GM12878 (cell line): ENCODE measurements at regions of chr2 and their contacts with region 1.

Region 1: DNA sequence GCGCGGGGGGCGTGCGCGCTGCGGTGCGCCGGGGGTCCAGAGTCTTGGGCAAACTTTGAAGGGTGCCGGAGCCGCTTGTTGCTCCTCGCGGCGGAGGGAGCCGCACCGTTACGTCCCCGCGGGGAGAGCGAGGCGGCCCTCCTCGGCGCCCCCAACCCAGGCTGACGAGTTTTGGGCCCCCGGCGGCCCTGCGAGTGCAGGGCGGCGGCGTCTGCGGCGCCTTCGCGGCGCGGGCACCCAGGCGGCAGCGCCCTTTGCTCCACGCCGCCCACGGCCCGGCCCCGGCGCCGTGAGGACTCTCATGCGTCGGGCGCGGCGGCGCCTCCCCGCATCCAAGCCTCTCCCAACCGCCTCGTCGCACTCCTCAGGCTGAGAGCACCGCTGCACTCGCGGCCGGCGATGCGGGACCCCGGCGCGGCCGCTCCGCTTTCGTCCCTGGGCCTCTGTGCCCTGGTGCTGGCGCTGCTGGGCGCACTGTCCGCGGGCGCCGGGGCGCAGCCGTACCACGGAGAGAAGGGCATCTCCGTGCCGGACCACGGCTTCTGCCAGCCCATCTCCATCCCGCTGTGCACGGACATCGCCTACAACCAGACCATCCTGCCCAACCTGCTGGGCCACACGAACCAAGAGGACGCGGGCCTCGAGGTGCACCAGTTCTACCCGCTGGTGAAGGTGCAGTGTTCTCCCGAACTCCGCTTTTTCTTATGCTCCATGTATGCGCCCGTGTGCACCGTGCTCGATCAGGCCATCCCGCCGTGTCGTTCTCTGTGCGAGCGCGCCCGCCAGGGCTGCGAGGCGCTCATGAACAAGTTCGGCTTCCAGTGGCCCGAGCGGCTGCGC is 814 bp downstream of the FZD7 start:
- DNase-seq: no peak
- ATAC-seq: peak; percentile 5
- H3K4me3 ChIP-seq: peak overlapping the region; percentile 90
- H3K27ac ChIP-seq: no peak overlapping the region
- H3K4me1 ChIP-seq: no peaks in the 10 kb centered on the region; the same call in 1 of the 2 replicates
- H3K27me3 ChIP-seq: peaks cover 0 to 15% of the 10 kb centered on the region in 2 experiments; a peak in 2 of 4 replicates
- CTCF ChIP-seq: no peak
- EP300 ChIP-seq: no peak
- POLR2A ChIP-seq: no peak
- RAD21 ChIP-seq: no peak

Region 2: DNA sequence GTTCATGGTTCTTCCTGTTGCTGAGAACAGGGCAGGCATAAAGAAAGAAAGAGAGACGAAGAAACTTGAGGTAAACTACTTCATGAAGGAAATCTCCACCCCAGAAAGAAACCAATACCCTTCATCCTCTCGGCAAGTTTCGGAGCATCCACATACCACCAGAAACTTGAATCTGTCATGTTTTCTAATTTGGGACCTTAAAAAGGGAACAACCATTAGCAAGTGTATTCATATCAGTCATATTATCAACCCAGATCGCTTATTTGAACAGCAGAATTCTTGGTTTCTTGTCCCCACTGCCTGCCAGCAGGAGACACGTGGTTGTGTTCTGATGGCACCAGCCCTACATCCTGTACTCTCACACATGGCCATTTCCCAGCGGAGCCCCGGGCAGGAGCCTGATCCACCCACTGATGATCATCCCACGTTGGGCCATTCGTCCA is 54.1 kb before region 1 on chr2:
- CTCF ChIA-PET with region 1: no interaction called
- POLR2A ChIA-PET with region 1: no interaction called
- RAD21 ChIA-PET with region 1: no interaction called
- SMC1A ChIA-PET with region 1: no interaction called
- in situ Hi-C with region 1: no loop called
- intact Hi-C with region 1: loop called (anchors 5 kb)
- DNase-seq: peak; percentile 69
- ATAC-seq: peak; percentile 88
- H3K4me3 ChIP-seq: no peak overlapping the region
- H3K27ac ChIP-seq: peak overlapping the region; percentile 17
- H3K4me1 ChIP-seq: peaks cover 7% of the 10 kb centered on the region
- H3K27me3 ChIP-seq: no peaks in the 10 kb centered on the region
- CTCF ChIP-seq: no peak
- EP300 ChIP-seq: no peak
- POLR2A ChIP-seq: no peak
- RAD21 ChIP-seq: no peak